GM12878 (cell line): ENCODE measurements at regions of chr2 and their contacts with region 1.

Region 1: GRCh38 chr2:190648289-190649034 is 421 bp upstream of the NAB1 start:
- DNase-seq: peak; percentile 17
- ATAC-seq: peak; percentile 75
- H3K4me3 ChIP-seq: peak overlapping the region; percentile 69
- H3K27ac ChIP-seq: peak overlapping the region; percentile 59
- H3K4me1 ChIP-seq: no peaks in the 10 kb centered on the region
- H3K27me3 ChIP-seq: no peaks in the 10 kb centered on the region
- CTCF ChIP-seq: no peak
- EP300 ChIP-seq: peak in 1 of 2 experiments; percentile 58; a peak in 1 of 4 replicates
- POLR2A ChIP-seq: peak; percentile 19; the same call in 1 of the 2 replicates
- RAD21 ChIP-seq: 0 out of 2 replicates have a peak, but pooled peaks have one; percentile 10

Region 2: GRCh38 chr2:190528521-190529001 is 119.9 kb before region 1 on chr2:
- CTCF ChIA-PET with region 1: no interaction called
- POLR2A ChIA-PET with region 1: interaction called, 4 read pairs
- RAD21 ChIA-PET with region 1: interaction called, 14 read pairs
- SMC1A ChIA-PET with region 1: interaction called, 18 read pairs
- in situ Hi-C with region 1: no loop called
- intact Hi-C with region 1: no loop called
- DNase-seq: no peak
- ATAC-seq: peak; percentile 6; the same call in 1 of the 3 replicates
- H3K4me3 ChIP-seq: no peak overlapping the region
- H3K27ac ChIP-seq: no peak overlapping the region
- H3K4me1 ChIP-seq: peaks cover 44% of the 10 kb centered on the region
- H3K27me3 ChIP-seq: no peaks in the 10 kb centered on the region
- CTCF ChIP-seq: no peak
- EP300 ChIP-seq: no peak
- POLR2A ChIP-seq: no peak
- RAD21 ChIP-seq: no peak

Region 3: GRCh38 chr2:190636373-190636772 is 12.1 kb before region 1 on chr2:
- CTCF ChIA-PET with region 1: interaction called, 11 read pairs
- POLR2A ChIA-PET with region 1: interaction called, 3 read pairs
- RAD21 ChIA-PET with region 1: interaction called, 5 read pairs
- SMC1A ChIA-PET with region 1: interaction called, 11 read pairs
- in situ Hi-C with region 1: no loop called
- intact Hi-C with region 1: no loop called
- DNase-seq: no peak
- ATAC-seq: 0 out of 3 replicates have a peak, but pooled peaks have one; percentile 12
- H3K4me3 ChIP-seq: no peak overlapping the region
- H3K27ac ChIP-seq: no peak overlapping the region
- H3K4me1 ChIP-seq: 0 out of 2 replicates have a peak, but pooled peaks cover 3% of the 10 kb centered on the region
- H3K27me3 ChIP-seq: no peaks in the 10 kb centered on the region
- CTCF ChIP-seq: no peak
- EP300 ChIP-seq: no peak
- POLR2A ChIP-seq: no peak
- RAD21 ChIP-seq: no peak

Region 4: DNA sequence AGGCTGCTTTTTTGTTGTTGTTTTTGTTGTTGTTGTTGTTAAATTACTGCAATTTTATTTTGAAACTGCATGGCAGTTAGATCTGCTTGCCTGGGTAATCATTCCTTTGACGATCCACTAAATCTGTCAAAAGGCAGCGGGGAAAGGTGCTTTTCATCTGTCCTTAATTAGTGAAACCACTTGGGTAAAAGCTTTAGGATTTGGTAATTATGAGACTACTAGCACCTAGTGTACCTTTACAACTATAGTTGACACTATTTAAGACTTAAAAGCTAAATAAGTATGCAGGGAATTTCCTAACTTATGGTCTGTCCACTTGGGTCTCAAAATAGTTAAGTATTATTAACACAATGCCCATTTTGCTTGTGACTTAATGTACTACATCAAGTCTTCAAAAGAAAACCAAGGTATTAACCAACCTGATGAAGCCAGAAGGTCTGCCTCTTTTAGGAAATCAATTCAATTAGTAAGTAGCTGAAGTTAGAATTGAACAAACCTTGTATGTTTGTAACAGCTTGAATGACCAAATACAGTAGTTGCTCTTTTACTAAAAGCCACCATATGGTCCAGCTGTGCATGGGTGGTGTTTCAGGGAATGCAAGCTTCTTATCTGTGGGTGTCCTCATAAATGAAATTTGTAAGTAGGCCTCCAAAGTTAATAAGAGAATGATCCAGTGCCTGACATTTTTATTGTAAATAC is 45.2 kb after region 1 on chr2:
- CTCF ChIA-PET with region 1: interaction called, 4 read pairs
- POLR2A ChIA-PET with region 1: interaction called, 4 read pairs
- RAD21 ChIA-PET with region 1: interaction called, 16 read pairs
- SMC1A ChIA-PET with region 1: interaction called, 33 read pairs
- in situ Hi-C with region 1: no loop called
- intact Hi-C with region 1: no loop called
- DNase-seq: no peak
- ATAC-seq: peak; percentile 71
- H3K4me3 ChIP-seq: no peak overlapping the region
- H3K27ac ChIP-seq: peak overlapping the region; percentile 46
- H3K4me1 ChIP-seq: peaks cover 18% of the 10 kb centered on the region
- H3K27me3 ChIP-seq: no peaks in the 10 kb centered on the region
- CTCF ChIP-seq: no peak
- EP300 ChIP-seq: peak; percentile 13 to 58; a peak in 3 of 4 replicates
- POLR2A ChIP-seq: no peak
- RAD21 ChIP-seq: no peak

Region 5: GRCh38 chr2:190707726-190708125 is 59.3 kb after region 1 on chr2:
- CTCF ChIA-PET with region 1: interaction called, 9 read pairs
- POLR2A ChIA-PET with region 1: interaction called, 8 read pairs
- RAD21 ChIA-PET with region 1: interaction called, 8 read pairs
- SMC1A ChIA-PET with region 1: interaction called, 20 read pairs
- in situ Hi-C with region 1: no loop called
- intact Hi-C with region 1: no loop called
- DNase-seq: no peak
- ATAC-seq: peak; percentile 66
- H3K4me3 ChIP-seq: no peak overlapping the region
- H3K27ac ChIP-seq: no peak overlapping the region
- H3K4me1 ChIP-seq: peaks cover 30% of the 10 kb centered on the region
- H3K27me3 ChIP-seq: no peaks in the 10 kb centered on the region
- CTCF ChIP-seq: no peak
- EP300 ChIP-seq: no peak
- POLR2A ChIP-seq: no peak
- RAD21 ChIP-seq: no peak

Region 6: GRCh38 chr2:190880378-190881073 is 232.1 kb after region 1 on chr2 and contains the start of gene GLS:
- CTCF ChIA-PET with region 1: no interaction called
- POLR2A ChIA-PET with region 1: no interaction called
- RAD21 ChIA-PET with region 1: no interaction called
- SMC1A ChIA-PET with region 1: no interaction called
- in situ Hi-C with region 1: no loop called
- intact Hi-C with region 1: loop called (anchors 10 kb)
- DNase-seq: peak; percentile 86
- ATAC-seq: peak; percentile 83
- H3K4me3 ChIP-seq: peak within 1 kb of the TSS; percentile 94
- H3K27ac ChIP-seq: peak within 1 kb of the TSS; percentile 95
- H3K4me1 ChIP-seq: peaks cover 6% of the 10 kb centered on the region; the same call in 1 of the 2 replicates
- H3K27me3 ChIP-seq: no peaks in the 10 kb centered on the region
- CTCF ChIP-seq: no peak
- EP300 ChIP-seq: 0 out of 4 replicates have a peak, but pooled peaks of 1 of the 2 experiments have one; percentile 20
- POLR2A ChIP-seq: peak; percentile 99
- RAD21 ChIP-seq: no peak
- polyA plus RNA-seq, gene GLS: 23.7 to 30.5 TPM

Region 7: GRCh38 chr2:191041418-191042161 is 393.1 kb after region 1 on chr2:
- CTCF ChIA-PET with region 1: no interaction called
- POLR2A ChIA-PET with region 1: no interaction called
- RAD21 ChIA-PET with region 1: no interaction called
- SMC1A ChIA-PET with region 1: no interaction called
- in situ Hi-C with region 1: no loop called
- intact Hi-C with region 1: no loop called
- DNase-seq: no peak
- ATAC-seq: no peak; the same call in 2 of the 3 replicates
- H3K4me3 ChIP-seq: no peak overlapping the region
- H3K27ac ChIP-seq: no peak overlapping the region
- H3K4me1 ChIP-seq: no peaks in the 10 kb centered on the region; the same call in 1 of the 2 replicates
- H3K27me3 ChIP-seq: no peaks in the 10 kb centered on the region; a peak in 1 of 4 replicates
- CTCF ChIP-seq: no peak
- EP300 ChIP-seq: no peak
- POLR2A ChIP-seq: no peak
- RAD21 ChIP-seq: no peak

Region 8: DNA sequence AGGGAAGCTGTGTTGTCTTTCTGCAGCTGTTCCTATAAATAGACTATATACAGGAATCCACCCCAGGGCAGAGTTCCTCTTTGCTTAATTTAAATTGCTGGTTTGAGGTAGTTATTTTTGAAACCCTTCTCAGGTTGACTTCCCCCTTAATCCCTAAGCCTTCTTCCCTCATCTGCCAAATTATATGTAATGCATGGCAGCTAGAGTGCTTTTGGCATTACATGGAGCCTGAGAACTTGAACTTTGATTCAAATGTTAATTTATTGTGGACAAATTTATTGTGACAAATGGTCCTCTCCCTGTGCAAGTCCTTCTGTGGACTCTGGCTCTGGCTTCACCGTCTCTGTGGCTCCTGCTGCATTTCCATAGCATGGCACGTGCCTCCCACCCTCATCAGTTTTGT is 626.0 kb after region 1 on chr2:
- CTCF ChIA-PET with region 1: no interaction called
- POLR2A ChIA-PET with region 1: no interaction called
- RAD21 ChIA-PET with region 1: no interaction called
- SMC1A ChIA-PET with region 1: no interaction called
- in situ Hi-C with region 1: no loop called
- intact Hi-C with region 1: no loop called
- DNase-seq: peak; percentile 8
- ATAC-seq: peak; percentile 36; the same call in 1 of the 3 replicates
- H3K4me3 ChIP-seq: no peak overlapping the region; the same call in 1 of the 2 replicates
- H3K27ac ChIP-seq: no peak overlapping the region
- H3K4me1 ChIP-seq: no peaks in the 10 kb centered on the region
- H3K27me3 ChIP-seq: peaks cover 0 to 3% of the 10 kb centered on the region in 2 experiments; a peak in 2 of 4 replicates
- CTCF ChIP-seq: no peak
- EP300 ChIP-seq: no peak
- POLR2A ChIP-seq: no peak
- RAD21 ChIP-seq: no peak